Endothelial cell of umbilical vein (primary cell): ENCODE measurements at regions of chr7 and their contacts with region 1.

Region 1: GRCh38 chr7:45580053-45580872 is 6.1 kb downstream of the ADCY1 start:
- DNase-seq: no peak
- H3K4me3 ChIP-seq: no peak overlapping the region
- H3K27ac ChIP-seq: no peak overlapping the region
- H3K4me1 ChIP-seq: no peaks in the 10 kb centered on the region
- H3K27me3 ChIP-seq: peaks cover 14 to 25% of the 10 kb centered on the region in 2 experiments
- CTCF ChIP-seq: peak; percentile 18 to 23
- POLR2A ChIP-seq: no peak

Region 2: DNA sequence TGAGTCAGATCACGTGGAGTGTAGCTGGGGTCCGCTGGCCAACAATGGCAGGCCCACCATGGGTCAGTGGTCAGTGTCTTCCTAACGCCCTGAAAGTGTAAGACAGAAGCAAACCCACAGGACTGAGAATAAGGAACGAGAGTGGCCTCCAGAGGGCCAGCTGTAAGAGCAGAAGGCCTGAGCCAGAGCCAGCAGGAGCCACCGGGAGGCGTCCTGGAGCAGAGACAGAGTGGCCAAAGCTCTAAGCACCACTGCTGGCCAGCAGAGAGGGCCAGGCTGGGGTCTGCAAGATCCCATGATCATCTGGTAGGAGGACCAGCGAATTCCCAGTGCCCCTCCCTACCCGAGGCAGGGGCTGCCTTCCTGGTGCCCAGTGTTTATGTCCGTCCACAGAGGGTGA is 283.5 kb after region 1 on chr7:
- CTCF ChIA-PET with region 1: no interaction called
- POLR2A ChIA-PET with region 1: no interaction called
- dilution Hi-C with region 1: no loop called
- intact Hi-C with region 1: loop called (anchors 10 kb)
- DNase-seq: no peak
- H3K4me3 ChIP-seq: no peak overlapping the region
- H3K27ac ChIP-seq: no peak overlapping the region
- H3K4me1 ChIP-seq: peaks cover 4% of the 10 kb centered on the region
- H3K27me3 ChIP-seq: peaks cover 0 to 4% of the 10 kb centered on the region in 2 experiments
- CTCF ChIP-seq: peak; percentile 7 to 20
- POLR2A ChIP-seq: no peak